ENCODE measurements at regions of chr10 and their contacts with region 1.

Region 1: DNA sequence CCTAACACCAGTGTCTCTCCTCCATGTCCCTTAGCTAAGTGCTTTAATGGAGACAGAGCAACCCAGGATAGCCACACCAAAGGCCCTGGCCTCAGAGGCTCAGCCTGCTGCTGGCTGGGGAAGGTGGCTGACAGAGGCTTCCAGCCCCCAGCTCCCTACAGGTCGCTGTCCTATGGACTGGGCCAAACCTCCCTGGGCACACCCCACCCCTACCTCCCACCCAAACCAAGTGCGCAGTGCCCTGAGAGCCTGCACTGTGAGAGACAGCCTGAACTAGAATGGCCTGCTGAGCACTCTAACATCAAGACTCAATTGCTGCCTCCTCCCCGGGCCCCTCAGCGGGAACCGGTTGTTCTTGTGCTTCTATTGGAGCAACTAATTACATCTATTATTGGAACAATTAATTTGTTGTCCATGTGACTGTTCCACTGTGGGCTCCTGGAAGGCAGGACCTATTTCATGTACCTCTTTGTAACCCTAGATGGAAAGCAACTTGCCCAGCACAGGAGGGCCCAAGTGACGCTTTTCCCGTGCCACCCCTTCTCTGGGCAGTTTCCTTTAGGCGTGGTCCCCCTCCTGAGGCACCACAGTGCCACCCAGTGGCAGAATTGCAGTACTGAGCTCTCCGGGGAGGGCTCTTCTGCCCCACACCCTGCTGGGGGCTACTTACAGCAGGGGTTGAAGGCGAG is 63.6 kb upstream of the WAPL start:
- DNase-seq: peak; percentile 57
- ATAC-seq: peak; percentile 95
- H3K4me3 ChIP-seq: peak overlapping the region in 1 of 3 experiments; percentile 48; a peak in 2 of 6 replicates
- H3K27ac ChIP-seq: no peak overlapping the region
- H3K4me1 ChIP-seq: peaks cover 20% of the 10 kb centered on the region; the same call in 1 of the 2 replicates
- H3K27me3 ChIP-seq: peaks cover 0 to 7% of the 10 kb centered on the region in 2 experiments; a peak in 2 of 5 replicates
- CTCF ChIP-seq: peak; percentile 97
- EP300 ChIP-seq: no peak
- POLR2A ChIP-seq: no peak
- RAD21 ChIP-seq: peak; percentile 94

Region 2: DNA sequence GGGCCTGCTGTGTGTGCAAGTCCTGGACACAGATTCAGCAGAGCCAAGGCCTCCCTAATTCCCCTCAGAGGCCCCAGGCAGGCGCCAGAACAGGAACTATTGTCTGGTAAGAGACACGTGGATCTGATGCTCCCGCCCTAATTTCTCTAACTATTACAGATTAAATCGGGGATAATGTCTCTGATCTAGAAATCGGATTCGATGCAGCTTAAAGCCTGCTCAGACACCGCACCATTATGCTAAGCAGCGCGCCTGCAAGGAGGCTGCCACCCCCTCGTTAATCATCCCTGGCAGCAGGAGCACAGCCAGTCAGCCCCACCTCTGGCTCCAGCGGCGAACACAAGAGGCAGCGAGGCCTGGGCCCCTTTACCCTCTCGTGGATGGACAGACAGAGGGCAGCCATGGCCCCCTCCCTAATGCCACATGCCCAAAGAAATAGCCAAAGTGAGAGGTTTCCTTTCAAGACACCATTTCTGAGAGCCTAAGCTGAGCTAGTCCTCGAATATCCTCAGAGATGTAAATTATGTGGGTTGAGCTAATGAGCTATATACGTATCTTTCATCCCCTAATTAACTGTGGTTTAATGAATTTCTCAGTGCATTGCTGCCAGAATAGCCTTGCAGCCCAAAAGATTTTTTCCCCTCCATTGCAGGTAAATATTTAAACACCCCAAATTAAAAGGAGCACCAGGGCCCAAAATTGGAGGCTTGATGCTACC is 340.7 kb before region 1 on chr10:
- CTCF ChIA-PET with region 1: no interaction called
- POLR2A ChIA-PET with region 1: no interaction called
- in situ Hi-C with region 1: no loop called
- intact Hi-C with region 1: no loop called
- DNase-seq: no peak
- ATAC-seq: no peak
- H3K4me3 ChIP-seq: no peak overlapping the region
- H3K27ac ChIP-seq: no peak overlapping the region
- H3K4me1 ChIP-seq: no peaks in the 10 kb centered on the region
- H3K27me3 ChIP-seq: no peaks in the 10 kb centered on the region; a peak in 1 of 5 replicates
- CTCF ChIP-seq: no peak
- EP300 ChIP-seq: no peak
- POLR2A ChIP-seq: no peak
- RAD21 ChIP-seq: no peak

Region 3: GRCh38 chr10:86349474-86349873 is 235.7 kb before region 1 on chr10:
- CTCF ChIA-PET with region 1: interaction called, 6 read pairs
- POLR2A ChIA-PET with region 1: no interaction called
- in situ Hi-C with region 1: no loop called
- intact Hi-C with region 1: loop called (anchors 1 kb)
- DNase-seq: peak; percentile 60
- ATAC-seq: peak; percentile 93
- H3K4me3 ChIP-seq: no peak overlapping the region
- H3K27ac ChIP-seq: no peak overlapping the region
- H3K4me1 ChIP-seq: no peaks in the 10 kb centered on the region
- H3K27me3 ChIP-seq: peaks cover 2 to 17% of the 10 kb centered on the region in 2 experiments; a peak in 2 of 5 replicates
- CTCF ChIP-seq: peak; percentile 73
- EP300 ChIP-seq: no peak
- POLR2A ChIP-seq: no peak
- RAD21 ChIP-seq: peak; percentile 77

Region 4: GRCh38 chr10:86451604-86451960 is 133.6 kb before region 1 on chr10:
- CTCF ChIA-PET with region 1: no interaction called
- POLR2A ChIA-PET with region 1: no interaction called
- in situ Hi-C with region 1: no loop called
- intact Hi-C with region 1: loop called (anchors 10 kb)
- DNase-seq: no peak
- ATAC-seq: no peak
- H3K4me3 ChIP-seq: no peak overlapping the region
- H3K27ac ChIP-seq: no peak overlapping the region
- H3K4me1 ChIP-seq: peaks cover 30% of the 10 kb centered on the region
- H3K27me3 ChIP-seq: no peaks in the 10 kb centered on the region
- CTCF ChIP-seq: no peak
- EP300 ChIP-seq: no peak
- POLR2A ChIP-seq: no peak
- RAD21 ChIP-seq: no peak

Region 5: DNA sequence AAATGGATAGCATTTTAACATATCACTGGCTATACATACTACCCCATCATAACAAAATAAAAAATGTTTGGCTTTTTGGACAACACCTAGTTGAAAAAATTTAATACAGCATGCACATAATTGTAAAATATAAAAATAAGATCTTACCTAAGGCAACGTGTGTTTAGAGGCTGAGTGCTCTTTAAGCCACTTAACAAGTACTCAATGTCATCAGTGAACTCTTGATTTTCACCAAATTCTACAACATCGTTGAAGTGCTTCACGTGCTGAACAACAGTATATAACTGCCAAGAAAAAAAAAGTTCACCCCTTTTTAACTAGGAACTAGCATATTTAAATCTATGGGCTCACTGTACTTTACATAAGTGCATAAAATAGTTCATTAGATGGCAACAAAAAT is 113.1 kb before region 1 on chr10:
- CTCF ChIA-PET with region 1: no interaction called
- POLR2A ChIA-PET with region 1: no interaction called
- in situ Hi-C with region 1: no loop called
- intact Hi-C with region 1: no loop called
- DNase-seq: no peak
- ATAC-seq: no peak
- H3K4me3 ChIP-seq: no peak overlapping the region
- H3K27ac ChIP-seq: no peak overlapping the region
- H3K4me1 ChIP-seq: no peaks in the 10 kb centered on the region
- H3K27me3 ChIP-seq: no peaks in the 10 kb centered on the region
- CTCF ChIP-seq: no peak
- EP300 ChIP-seq: no peak
- POLR2A ChIP-seq: no peak
- RAD21 ChIP-seq: no peak

Region 6: DNA sequence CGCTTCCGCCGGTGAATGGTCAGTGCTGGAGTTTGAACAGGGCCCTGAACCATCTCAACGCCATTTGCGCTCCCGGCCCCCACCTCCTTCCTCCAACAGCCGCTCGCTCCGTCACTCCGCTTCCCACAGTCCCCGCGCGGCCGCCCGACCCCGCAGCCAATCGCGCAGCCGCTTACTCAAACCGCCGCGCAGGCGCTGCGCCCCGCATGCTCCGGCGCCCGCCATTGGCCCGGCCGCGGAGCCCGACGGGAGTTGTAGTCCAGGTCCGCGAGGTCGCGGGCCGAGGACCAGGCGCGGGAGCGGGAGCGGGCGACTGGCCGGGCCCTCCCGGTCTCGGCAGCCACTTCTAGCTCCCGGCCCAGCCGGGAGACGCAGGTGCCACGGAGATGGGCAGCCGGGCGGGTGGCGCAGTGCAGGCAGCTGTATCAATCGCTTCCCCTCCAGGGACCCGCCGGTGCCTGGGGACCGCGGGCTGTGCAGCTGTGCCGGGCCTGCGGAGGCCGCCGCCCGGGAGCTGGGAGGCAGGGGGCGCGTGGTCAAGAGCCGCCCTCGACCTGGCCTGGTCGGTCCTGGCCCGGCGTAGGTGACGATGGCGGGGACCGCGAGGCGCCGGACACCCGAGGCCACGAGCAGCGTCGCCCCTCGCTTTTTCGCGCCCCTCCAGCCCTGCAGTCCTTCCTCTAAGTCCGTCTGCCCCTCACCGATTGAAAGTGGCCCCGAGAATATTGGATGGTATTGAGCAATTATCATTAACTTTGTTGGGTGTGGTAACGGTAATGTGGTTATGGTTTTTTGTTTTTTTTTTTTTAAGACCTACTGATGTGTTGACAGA is 63.3 kb before region 1 on chr10 and contains the start of gene WAPL:
- CTCF ChIA-PET with region 1: interaction called, 8 read pairs
- POLR2A ChIA-PET with region 1: interaction called, 3 read pairs
- in situ Hi-C with region 1: no loop called
- intact Hi-C with region 1: loop called (anchors 1 kb)
- DNase-seq: peak; percentile 87
- ATAC-seq: peak; percentile 94
- H3K4me3 ChIP-seq: peak within 1 kb of the TSS; percentile 73 to 99 (median 79)
- H3K27ac ChIP-seq: peak within 1 kb of the TSS; percentile 87
- H3K4me1 ChIP-seq: peaks cover 58% of the 10 kb centered on the region
- H3K27me3 ChIP-seq: no peaks in the 10 kb centered on the region; a peak in 1 of 5 replicates
- CTCF ChIP-seq: peak; percentile 28; the same call in 1 of the 2 replicates
- EP300 ChIP-seq: no peak
- POLR2A ChIP-seq: peak; percentile 60 to 77; a peak in 3 of 4 replicates
- RAD21 ChIP-seq: peak; percentile 44
- total RNA-seq, gene WAPL: 43.5 and 64.9 TPM in 2 replicates

Region 7: GRCh38 chr10:86535057-86535882 is 49.9 kb before region 1 on chr10:
- CTCF ChIA-PET with region 1: no interaction called
- POLR2A ChIA-PET with region 1: interaction called, 4 read pairs
- in situ Hi-C with region 1: loop called (anchors 5 kb)
- intact Hi-C with region 1: no loop called
- DNase-seq: peak; percentile 38
- ATAC-seq: peak; percentile 95
- H3K4me3 ChIP-seq: peak overlapping the region; percentile 74 to 81 (median 79)
- H3K27ac ChIP-seq: no peak overlapping the region
- H3K4me1 ChIP-seq: peaks cover 24% of the 10 kb centered on the region
- H3K27me3 ChIP-seq: peaks cover 0 to 1% of the 10 kb centered on the region in 2 experiments; a peak in 1 of 5 replicates
- CTCF ChIP-seq: no peak
- EP300 ChIP-seq: no peak; a peak in 1 of 4 replicates
- POLR2A ChIP-seq: peak in 1 of 2 experiments; percentile 58; a peak in 2 of 4 replicates
- RAD21 ChIP-seq: no peak

Region 8: DNA sequence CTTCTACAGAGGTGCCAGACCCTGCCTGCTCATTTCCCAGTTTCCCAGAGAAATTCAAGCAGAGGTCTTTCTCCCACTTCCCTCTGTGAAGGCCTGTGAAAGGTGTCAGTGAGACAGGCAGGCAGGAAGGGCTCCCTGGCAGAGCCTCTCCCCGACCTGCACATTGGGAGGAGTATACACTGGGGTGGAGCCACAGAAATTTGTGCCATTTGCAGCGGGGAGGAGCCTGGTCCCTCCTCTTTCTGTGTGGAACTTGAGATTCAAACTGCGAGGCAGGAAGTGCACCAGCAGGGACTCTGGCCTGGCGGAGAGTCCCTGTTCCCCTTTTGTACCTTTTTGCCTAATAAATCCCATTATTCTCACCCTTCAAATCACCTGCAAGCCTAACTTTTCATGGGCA is 14.5 kb after region 1 on chr10:
- CTCF ChIA-PET with region 1: no interaction called
- POLR2A ChIA-PET with region 1: no interaction called
- in situ Hi-C with region 1: no loop called
- intact Hi-C with region 1: no loop called
- DNase-seq: no peak
- ATAC-seq: peak; percentile 74
- H3K4me3 ChIP-seq: no peak overlapping the region
- H3K27ac ChIP-seq: no peak overlapping the region
- H3K4me1 ChIP-seq: peaks cover 41% of the 10 kb centered on the region
- H3K27me3 ChIP-seq: no peaks in the 10 kb centered on the region; a peak in 2 of 5 replicates
- CTCF ChIP-seq: no peak
- EP300 ChIP-seq: no peak
- POLR2A ChIP-seq: no peak
- RAD21 ChIP-seq: no peak